H1 (cell line): ENCODE measurements at regions of chr12 and their contacts with region 1.

Region 1: GRCh38 chr12:57583008-57583831 is 7.8 kb upstream of the PIP4K2C start:
- DNase-seq: peak; percentile 25 to 76
- H3K4me3 ChIP-seq: no peak overlapping the region
- H3K27ac ChIP-seq: no peak overlapping the region
- H3K4me1 ChIP-seq: no peaks in the 10 kb centered on the region
- H3K27me3 ChIP-seq: no peaks in the 10 kb centered on the region
- CTCF ChIP-seq: peak; percentile 71 to 99 (median 97)
- EP300 ChIP-seq: no peak
- POLR2A ChIP-seq: no peak
- RAD21 ChIP-seq: peak; percentile 88 to 94

Region 2: DNA sequence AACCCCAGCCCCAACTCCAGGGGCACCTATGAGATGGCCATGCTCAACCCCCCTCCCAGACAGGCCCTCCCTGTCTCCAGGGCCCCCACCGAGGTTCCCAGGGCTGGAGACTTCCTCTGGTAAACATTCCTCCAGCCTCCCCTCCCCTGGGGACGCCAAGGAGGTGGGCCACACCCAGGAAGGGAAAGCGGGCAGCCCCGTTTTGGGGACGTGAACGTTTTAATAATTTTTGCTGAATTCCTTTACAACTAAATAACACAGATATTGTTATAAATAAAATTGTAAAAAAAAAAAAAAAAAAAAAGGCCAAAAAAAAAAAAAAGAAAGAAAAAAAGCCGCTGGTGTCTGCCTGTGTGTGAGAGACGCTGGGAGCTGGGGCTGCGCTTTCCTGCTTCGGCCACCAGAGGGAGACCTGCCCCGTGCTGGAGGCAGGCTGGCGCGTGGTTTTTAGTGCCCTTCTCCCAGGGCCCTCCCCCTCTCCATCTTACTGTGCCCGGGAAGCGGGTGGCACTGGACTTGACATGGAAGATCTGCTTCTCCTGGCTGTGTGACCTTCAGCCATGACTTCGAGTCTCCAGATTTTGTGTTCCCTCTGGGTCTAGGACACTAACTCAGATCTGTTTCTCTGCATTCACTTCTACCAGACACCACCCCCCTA is 370.0 kb before region 1 on chr12:
- CTCF ChIA-PET with region 1: no interaction called
- POLR2A ChIA-PET with region 1: no interaction called
- DNase-seq: peak in 1 of 2 experiments; percentile 92
- H3K4me3 ChIP-seq: peak overlapping the region in 3 of 4 experiments; percentile 4 to 13 (median 12); a peak in 3 of 8 replicates
- H3K27ac ChIP-seq: no peak overlapping the region
- H3K4me1 ChIP-seq: peaks cover 9 to 35% (median 25%) of the 10 kb centered on the region in 4 experiments
- H3K27me3 ChIP-seq: peaks cover 33 to 44% (median 42%) of the 10 kb centered on the region in 4 experiments
- CTCF ChIP-seq: peak in 2 of 3 experiments; percentile 88 to 90; a peak in 3 of 4 replicates
- EP300 ChIP-seq: no peak
- POLR2A ChIP-seq: peak in 1 of 2 experiments; percentile 22; a peak in 1 of 3 replicates
- RAD21 ChIP-seq: peak; percentile 76

Region 3: DNA sequence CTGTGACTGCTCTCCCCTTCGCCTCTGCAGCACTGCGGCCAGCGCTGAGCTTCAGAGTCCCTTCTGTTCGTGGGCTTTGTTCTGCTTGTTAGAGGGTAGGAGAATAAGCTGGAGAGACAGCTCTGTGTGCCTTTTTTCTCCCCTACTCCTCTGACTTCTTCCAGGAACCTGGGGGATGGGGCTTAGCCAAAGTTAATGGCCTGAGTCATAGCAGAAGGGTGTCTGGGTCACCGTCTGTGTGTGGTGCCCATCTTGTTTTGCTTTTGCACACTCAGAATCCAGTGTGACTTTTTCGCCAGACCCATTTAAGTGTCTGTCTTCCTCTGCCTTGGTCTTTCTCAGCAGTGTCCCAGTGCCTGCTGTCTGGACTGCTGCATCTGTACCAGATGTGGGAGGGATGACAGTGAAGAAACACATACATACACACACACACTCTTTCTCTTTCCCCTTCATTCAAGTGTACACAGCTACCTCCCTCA is 30.3 kb before region 1 on chr12:
- CTCF ChIA-PET with region 1: interaction called, 26 read pairs
- POLR2A ChIA-PET with region 1: no interaction called
- DNase-seq: no peak
- H3K4me3 ChIP-seq: no peak overlapping the region; a peak in 2 of 8 replicates
- H3K27ac ChIP-seq: 0 out of 2 replicates have a peak overlapping the region, but pooled peaks have one; percentile 29
- H3K4me1 ChIP-seq: peaks cover 4 to 20% (median 11%) of the 10 kb centered on the region in 4 experiments; a peak in 6 of 7 replicates
- H3K27me3 ChIP-seq: peaks cover 0 to 5% (median 3%) of the 10 kb centered on the region in 4 experiments; a peak in 2 of 7 replicates
- CTCF ChIP-seq: no peak
- EP300 ChIP-seq: no peak
- POLR2A ChIP-seq: no peak
- RAD21 ChIP-seq: no peak

Region 4: DNA sequence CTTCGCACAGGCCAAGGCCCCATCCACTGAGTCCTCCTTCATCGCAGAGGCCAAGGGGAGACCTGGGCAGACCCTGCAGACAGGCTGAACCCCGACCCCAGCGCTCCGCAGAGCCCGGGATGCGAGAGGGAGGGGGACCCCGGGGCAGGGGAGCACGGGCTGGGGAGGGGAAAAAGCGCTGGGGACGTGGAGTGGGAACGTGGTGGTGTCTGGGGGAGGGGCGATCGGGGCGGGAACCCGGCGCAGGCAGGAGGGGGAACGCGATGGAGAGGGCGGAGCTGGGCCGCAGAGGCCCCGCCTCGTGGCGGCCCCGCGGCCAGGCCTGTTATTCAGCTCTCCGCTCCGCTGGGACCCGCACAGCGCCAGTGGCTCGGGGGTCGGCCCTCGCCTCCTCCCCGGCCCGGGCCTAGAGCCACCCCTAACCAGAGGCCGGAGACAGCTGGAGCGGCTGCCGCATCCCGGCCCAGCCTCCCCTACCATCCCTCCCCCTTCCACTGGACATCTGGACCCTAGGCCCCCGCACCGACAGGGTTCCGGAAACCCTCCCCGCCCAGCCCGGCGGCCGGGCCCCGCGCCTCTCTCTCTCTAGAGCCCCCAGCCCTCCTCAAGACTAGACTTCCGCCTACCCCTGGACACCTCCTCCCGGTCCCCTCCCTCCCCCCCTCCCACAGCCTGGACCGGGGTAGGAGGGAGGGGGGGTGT is 28.0 kb after region 1 on chr12 and contains the start of gene ARHGEF25:
- CTCF ChIA-PET with region 1: interaction called, 124 read pairs
- POLR2A ChIA-PET with region 1: interaction called, 9 read pairs
- DNase-seq: peak in 1 of 2 experiments; percentile 83
- H3K4me3 ChIP-seq: peak within 1 kb of the TSS; percentile 50 to 73 (median 56)
- H3K27ac ChIP-seq: no peak within 1 kb of the TSS
- H3K4me1 ChIP-seq: peaks cover 8 to 17% (median 12%) of the 10 kb centered on the region in 4 experiments
- H3K27me3 ChIP-seq: peaks cover 4 to 59% (median 47%) of the 10 kb centered on the region in 4 experiments
- CTCF ChIP-seq: no peak
- EP300 ChIP-seq: no peak
- POLR2A ChIP-seq: no peak
- RAD21 ChIP-seq: no peak
- total RNA-seq, gene ARHGEF25: 5.9 and 6.4 TPM in 2 replicates

Region 5: GRCh38 chr12:57632694-57633477 is 49.7 kb after region 1 on chr12 and contains the start of gene B4GALNT1:
- CTCF ChIA-PET with region 1: interaction called, 201 read pairs
- POLR2A ChIA-PET with region 1: interaction called, 4 read pairs
- DNase-seq: peak in 1 of 2 experiments; percentile 85
- H3K4me3 ChIP-seq: peak within 1 kb of the TSS; percentile 43 to 83 (median 54)
- H3K27ac ChIP-seq: no peak within 1 kb of the TSS
- H3K4me1 ChIP-seq: peaks cover 0 to 13% (median 9%) of the 10 kb centered on the region in 4 experiments; a peak in 6 of 7 replicates
- H3K27me3 ChIP-seq: peaks cover 49 to 68% (median 63%) of the 10 kb centered on the region in 4 experiments
- CTCF ChIP-seq: peak in 2 of 3 experiments; percentile 84 to 90; a peak in 3 of 4 replicates
- EP300 ChIP-seq: no peak
- POLR2A ChIP-seq: no peak
- RAD21 ChIP-seq: peak; percentile 44 to 58; a peak in 3 of 4 replicates
- total RNA-seq, gene B4GALNT1: 1.4 and 1.5 TPM in 2 replicates

Region 6: DNA sequence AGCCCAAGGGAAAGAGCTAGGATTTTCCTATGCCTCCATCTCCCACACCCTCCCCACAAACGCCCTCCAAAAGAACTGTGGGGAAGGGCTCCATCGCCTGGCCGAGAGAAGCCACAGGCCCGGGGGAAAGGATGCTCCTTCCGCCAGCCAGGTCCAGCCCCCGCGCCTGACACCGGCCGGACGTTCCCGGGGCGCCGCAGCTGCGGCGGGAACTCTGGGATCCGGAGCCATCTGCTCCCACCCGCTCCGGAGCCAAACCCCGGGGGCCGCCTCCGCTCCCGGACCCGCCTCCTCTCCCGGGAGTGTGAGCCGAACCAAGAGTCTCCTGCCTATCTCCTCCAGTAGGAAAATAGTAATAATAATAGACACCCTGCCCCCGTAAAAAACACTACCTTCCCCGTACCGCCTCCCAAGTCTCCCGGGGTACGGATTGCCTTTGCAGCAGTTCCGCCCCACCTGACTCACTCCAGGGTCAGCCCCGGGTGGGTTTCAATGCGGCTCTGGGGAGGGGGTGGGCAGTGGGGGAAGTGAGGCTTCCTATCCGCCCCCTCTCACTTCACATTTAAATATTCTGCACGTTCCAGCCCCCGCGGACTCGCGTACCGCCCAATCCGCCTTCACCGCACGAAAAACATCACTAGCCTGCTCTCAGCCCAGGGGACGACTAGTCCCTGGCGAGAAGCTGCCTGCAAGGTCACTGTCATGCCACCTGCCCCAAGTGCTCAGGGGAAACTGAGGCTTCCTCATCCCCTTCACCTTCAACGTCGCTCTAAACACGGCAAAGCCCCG is 152.9 kb after region 1 on chr12:
- CTCF ChIA-PET with region 1: interaction called, 60 read pairs
- POLR2A ChIA-PET with region 1: no interaction called
- DNase-seq: peak in 1 of 2 experiments; percentile 80
- H3K4me3 ChIP-seq: peak overlapping the region; percentile 19 to 76 (median 30)
- H3K27ac ChIP-seq: no peak overlapping the region
- H3K4me1 ChIP-seq: peaks cover 6 to 29% (median 12%) of the 10 kb centered on the region in 4 experiments; a peak in 6 of 7 replicates
- H3K27me3 ChIP-seq: peaks cover 50 to 97% (median 90%) of the 10 kb centered on the region in 4 experiments
- CTCF ChIP-seq: peak; percentile 60 to 66 (median 64)
- EP300 ChIP-seq: 0 out of 3 replicates have a peak, but pooled peaks of 1 of the 2 experiments have one; percentile 52
- POLR2A ChIP-seq: no peak
- RAD21 ChIP-seq: peak; percentile 73 to 77

Region 7: GRCh38 chr12:58296863-58297262 is 713.6 kb after region 1 on chr12:
- CTCF ChIA-PET with region 1: no interaction called
- POLR2A ChIA-PET with region 1: no interaction called
- DNase-seq: no peak
- H3K4me3 ChIP-seq: no peak overlapping the region
- H3K27ac ChIP-seq: no peak overlapping the region
- H3K4me1 ChIP-seq: no peaks in the 10 kb centered on the region; a peak in 2 of 7 replicates
- H3K27me3 ChIP-seq: no peaks in the 10 kb centered on the region
- CTCF ChIP-seq: no peak
- EP300 ChIP-seq: no peak
- POLR2A ChIP-seq: no peak
- RAD21 ChIP-seq: no peak